MCF 10A (cell line): ENCODE measurements at regions of chr5 and their contacts with region 1.

Region 1: DNA sequence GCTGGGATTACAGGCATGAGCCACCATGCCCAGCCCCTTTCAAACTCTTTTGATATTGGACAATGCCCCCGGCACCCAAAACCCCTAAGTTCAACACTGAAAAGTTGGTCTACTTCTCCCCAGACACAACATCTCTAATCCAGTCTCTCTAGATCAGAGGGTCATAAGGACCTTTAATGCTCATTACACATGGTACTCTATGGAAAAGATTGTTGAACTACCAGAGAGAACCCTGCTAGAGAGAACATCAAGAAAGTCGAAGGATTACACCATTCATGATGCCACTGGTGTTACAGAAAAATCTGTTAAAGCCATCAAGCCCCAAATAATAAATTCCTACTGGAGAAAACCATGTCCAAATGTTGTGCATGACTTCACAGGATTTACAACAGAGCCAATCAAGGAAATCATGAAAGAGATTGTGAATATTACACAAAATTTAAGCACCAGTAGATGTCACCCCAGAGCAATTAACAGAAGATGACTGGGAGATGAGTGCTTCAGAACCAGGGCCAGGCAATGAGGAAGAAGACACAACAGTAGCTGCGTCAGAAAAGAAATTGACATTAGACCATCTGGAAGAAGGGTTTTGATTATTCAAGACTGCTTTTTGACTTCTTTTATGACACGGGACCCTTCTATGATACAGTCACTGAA is 28.3 kb upstream of the NIPAL4 start:
- DNase-seq: peak; percentile 82
- H3K4me3 Mint-ChIP-seq: no peak overlapping the region
- H3K27ac Mint-ChIP-seq: no peak overlapping the region
- H3K4me1 Mint-ChIP-seq: no peaks in the 10 kb centered on the region
- H3K27me3 Mint-ChIP-seq: no peaks in the 10 kb centered on the region
- CTCF ChIP-seq: peak; percentile 69

Region 2: GRCh38 chr5:157342822-157343402 is 88.8 kb before region 1 on chr5:
- CTCF ChIA-PET with region 1: interaction called, 21 read pairs
- POLR2A ChIA-PET with region 1: no interaction called
- intact Hi-C with region 1: no loop called
- DNase-seq: peak; percentile 66
- H3K4me3 Mint-ChIP-seq: no peak overlapping the region
- H3K27ac Mint-ChIP-seq: no peak overlapping the region
- H3K4me1 Mint-ChIP-seq: no peaks in the 10 kb centered on the region
- H3K27me3 Mint-ChIP-seq: no peaks in the 10 kb centered on the region
- CTCF ChIP-seq: peak; percentile 82

Region 3: DNA sequence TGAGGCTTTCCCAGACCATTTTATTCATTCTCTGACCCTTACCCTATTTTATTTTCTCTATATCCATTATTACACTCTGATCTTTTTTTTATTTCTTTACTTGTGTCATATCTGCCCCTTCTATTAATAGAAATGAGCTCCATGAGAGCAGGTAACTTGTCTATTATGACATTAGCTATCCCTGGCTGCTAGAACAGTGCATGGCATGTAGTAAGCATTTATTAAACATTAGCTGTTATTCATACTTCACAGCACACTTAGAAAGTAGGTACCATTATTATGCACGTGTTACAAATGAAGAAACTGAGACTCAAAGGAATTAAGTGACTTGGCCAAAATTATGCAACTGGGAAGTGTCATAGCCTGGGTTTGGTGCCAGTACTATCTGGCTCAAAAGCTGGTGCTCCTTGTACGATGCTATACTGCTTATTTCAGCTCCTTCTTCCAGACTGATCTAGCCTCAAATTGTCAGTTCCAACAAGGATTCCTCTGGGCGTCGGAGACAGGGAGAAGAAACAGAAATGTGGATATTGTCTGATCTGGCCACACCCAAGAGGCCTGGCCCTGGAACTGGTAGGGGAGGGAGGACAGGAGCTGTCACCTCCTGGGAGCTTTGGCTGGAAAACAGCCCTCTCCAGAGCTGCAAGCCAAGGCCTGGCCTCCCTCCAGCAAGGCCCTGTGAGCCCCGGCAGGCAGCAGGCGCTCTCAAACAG is 17.5 kb after region 1 on chr5:
- CTCF ChIA-PET with region 1: interaction called, 642 read pairs
- POLR2A ChIA-PET with region 1: interaction called, 4 read pairs
- intact Hi-C with region 1: no loop called
- DNase-seq: peak; percentile 47
- H3K4me3 Mint-ChIP-seq: no peak overlapping the region
- H3K27ac Mint-ChIP-seq: no peak overlapping the region
- H3K4me1 Mint-ChIP-seq: peaks cover 19% of the 10 kb centered on the region
- H3K27me3 Mint-ChIP-seq: no peaks in the 10 kb centered on the region
- CTCF ChIP-seq: no peak

Region 4: GRCh38 chr5:157471709-157472108 is 40.0 kb after region 1 on chr5:
- CTCF ChIA-PET with region 1: interaction called, 642 read pairs
- POLR2A ChIA-PET with region 1: interaction called, 10 read pairs
- intact Hi-C with region 1: loop called (anchors 1 kb)
- DNase-seq: peak; percentile 64
- H3K4me3 Mint-ChIP-seq: no peak overlapping the region
- H3K27ac Mint-ChIP-seq: no peak overlapping the region
- H3K4me1 Mint-ChIP-seq: no peaks in the 10 kb centered on the region
- H3K27me3 Mint-ChIP-seq: no peaks in the 10 kb centered on the region
- CTCF ChIP-seq: peak; percentile 81

Region 5: DNA sequence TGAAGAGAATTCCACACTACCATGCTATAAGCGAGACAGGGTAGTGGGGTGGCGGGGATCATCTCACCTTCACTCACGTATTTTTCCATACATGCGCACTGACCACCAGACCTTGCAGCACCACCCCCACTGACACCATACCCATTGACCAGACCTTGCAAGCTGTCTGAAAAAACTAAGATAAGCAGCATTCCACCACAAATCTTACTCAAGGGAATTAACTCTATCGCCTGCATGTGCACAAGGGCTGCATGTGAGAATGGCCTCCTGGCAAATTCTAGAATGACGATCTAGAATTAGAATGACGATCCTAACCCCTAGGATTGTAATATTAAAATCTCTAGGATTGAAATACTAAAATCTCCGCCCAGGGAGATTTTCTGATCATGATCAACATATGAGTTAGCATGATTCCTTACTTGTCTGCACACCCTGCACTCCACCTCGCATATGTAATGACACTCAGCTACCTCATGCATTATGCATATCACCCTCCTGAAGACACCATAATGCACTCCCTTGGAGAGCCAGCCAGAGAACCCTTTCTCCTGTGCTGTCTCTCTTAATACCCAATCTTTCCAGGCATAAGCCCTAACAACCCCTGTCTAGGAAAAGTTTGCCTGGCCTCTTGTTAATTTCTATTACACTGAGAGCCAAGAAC is 208.9 kb after region 1 on chr5:
- CTCF ChIA-PET with region 1: no interaction called
- POLR2A ChIA-PET with region 1: no interaction called
- intact Hi-C with region 1: no loop called
- DNase-seq: no peak
- H3K4me3 Mint-ChIP-seq: no peak overlapping the region
- H3K27ac Mint-ChIP-seq: no peak overlapping the region
- H3K4me1 Mint-ChIP-seq: no peaks in the 10 kb centered on the region
- H3K27me3 Mint-ChIP-seq: no peaks in the 10 kb centered on the region
- CTCF ChIP-seq: no peak

Region 6: DNA sequence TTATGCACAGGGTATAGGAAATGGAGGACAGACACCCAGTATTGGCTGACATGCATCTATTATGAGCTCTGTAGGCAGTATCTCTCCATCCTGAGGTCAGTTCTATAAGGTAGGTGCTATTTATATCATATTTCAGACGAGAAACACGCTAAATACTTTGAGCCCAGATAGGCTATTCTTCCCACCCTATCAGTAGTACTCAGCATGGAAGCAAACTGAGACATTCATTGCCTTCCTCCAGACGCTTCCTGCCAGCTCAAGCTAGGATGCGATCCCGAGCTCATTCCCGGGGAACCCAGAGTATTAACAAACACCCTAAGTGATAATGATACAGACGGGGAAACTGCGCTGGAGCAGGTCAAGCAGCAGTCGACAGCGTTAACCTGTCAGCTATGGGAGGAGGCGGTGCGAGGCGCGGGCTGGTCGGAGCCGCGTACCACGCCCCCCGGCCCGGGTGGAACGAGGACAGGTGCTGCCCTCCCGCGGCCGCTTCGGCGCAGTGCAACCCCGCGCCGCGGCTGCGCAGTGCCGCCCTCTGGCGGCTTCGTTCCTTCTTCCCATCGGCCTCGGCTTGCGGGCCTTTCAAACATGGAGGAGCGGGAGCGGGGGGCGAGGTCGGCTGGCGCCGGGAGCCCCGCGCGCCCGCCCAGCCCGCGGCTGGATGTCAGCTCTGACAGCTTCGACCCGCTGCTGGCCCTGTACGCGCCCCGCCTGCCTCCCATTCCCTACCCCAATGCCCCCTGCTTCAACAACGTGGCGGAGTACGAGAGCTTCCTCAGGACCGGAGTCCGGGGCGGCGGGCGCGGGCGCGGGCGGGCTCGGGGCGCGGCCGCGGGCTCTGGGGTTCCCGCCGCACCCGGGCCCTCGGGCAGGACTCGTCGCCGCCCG is 311.7 kb after region 1 on chr5 and contains the start of gene LSM11:
- CTCF ChIA-PET with region 1: interaction called, 44 read pairs
- POLR2A ChIA-PET with region 1: interaction called, 5 read pairs
- intact Hi-C with region 1: loop called (anchors 1 kb)
- DNase-seq: peak; percentile 90
- H3K4me3 Mint-ChIP-seq: peak within 1 kb of the TSS; percentile 78
- H3K27ac Mint-ChIP-seq: peak within 1 kb of the TSS; percentile 68
- H3K4me1 Mint-ChIP-seq: peaks cover 18% of the 10 kb centered on the region
- H3K27me3 Mint-ChIP-seq: no peaks in the 10 kb centered on the region
- CTCF ChIP-seq: peak; percentile 100
- total RNA-seq, gene LSM11: 3.4 and 4.5 TPM in 2 replicates